ENCODE measurements at regions of chr4 and their contacts with region 1.

Region 1: GRCh38 chr4:47836641-47837093 is 1.2 kb downstream of the CORIN start:
- DNase-seq: peak in 30 of 35 experiments; percentile 10 to 62 (median 30)
- ATAC-seq: peak; percentile 69 to 80 (median 76)
- H3K4me3 ChIP-seq: peak overlapping the region; percentile 58 to 99
- H3K4me3 Mint-ChIP-seq: peak overlapping the region; percentile 84 to 90 (median 88)
- H3K27ac ChIP-seq: no peak overlapping the region
- H3K27ac Mint-ChIP-seq: peak overlapping the region in 1 of 2 donors; percentile 48
- H3K4me1 ChIP-seq: peaks cover 16 to 27% of the 10 kb centered on the region in 2 experiments
- H3K4me1 Mint-ChIP-seq: peaks cover 21 to 46% (median 33%) of the 10 kb centered on the region in 3 donors
- H3K27me3 ChIP-seq: peaks cover 4 to 9% of the 10 kb centered on the region in 2 experiments
- H3K27me3 Mint-ChIP-seq: peaks cover 3 to 11% of the 10 kb centered on the region in 2 donors

Region 2: GRCh38 chr4:47686294-47686872 is 150.3 kb before region 1 on chr4:
- CTCF ChIA-PET with region 1: interaction called in 1 of 2 experiments, 23 read pairs
- POLR2A ChIA-PET with region 1: no interaction called
- DNase-seq: peak; percentile 8 to 75 (median 42)
- ATAC-seq: peak in 3 of 4 experiments; percentile 60 to 77 (median 73)
- H3K4me3 ChIP-seq: no peak overlapping the region
- H3K4me3 Mint-ChIP-seq: no peak overlapping the region
- H3K27ac ChIP-seq: no peak overlapping the region
- H3K27ac Mint-ChIP-seq: no peak overlapping the region
- H3K4me1 ChIP-seq: no peaks in the 10 kb centered on the region
- H3K4me1 Mint-ChIP-seq: no peaks in the 10 kb centered on the region
- H3K27me3 ChIP-seq: no peaks in the 10 kb centered on the region
- H3K27me3 Mint-ChIP-seq: peaks cover 11 to 13% of the 10 kb centered on the region in 2 donors

Region 3: GRCh38 chr4:47933840-47934239 is 97.2 kb after region 1 on chr4:
- CTCF ChIA-PET with region 1: interaction called in 1 of 2 experiments, 10 read pairs
- POLR2A ChIA-PET with region 1: no interaction called
- DNase-seq: peak in 1 of 35 experiments; percentile 72
- ATAC-seq: peak in 3 of 4 experiments; percentile 29 to 65 (median 64)
- H3K4me3 ChIP-seq: no peak overlapping the region
- H3K4me3 Mint-ChIP-seq: no peak overlapping the region
- H3K27ac ChIP-seq: no peak overlapping the region
- H3K27ac Mint-ChIP-seq: no peak overlapping the region
- H3K4me1 ChIP-seq: no peaks in the 10 kb centered on the region
- H3K4me1 Mint-ChIP-seq: peaks cover 0 to 5% (median 2%) of the 10 kb centered on the region in 3 donors
- H3K27me3 ChIP-seq: no peaks in the 10 kb centered on the region
- H3K27me3 Mint-ChIP-seq: peaks cover 0 to 5% of the 10 kb centered on the region in 2 donors

Region 4: GRCh38 chr4:48173056-48173991 is 336.7 kb after region 1 on chr4:
- CTCF ChIA-PET with region 1: no interaction called
- POLR2A ChIA-PET with region 1: no interaction called
- DNase-seq: no peak
- ATAC-seq: no peak
- H3K4me3 ChIP-seq: no peak overlapping the region
- H3K4me3 Mint-ChIP-seq: no peak overlapping the region
- H3K27ac ChIP-seq: no peak overlapping the region
- H3K27ac Mint-ChIP-seq: no peak overlapping the region
- H3K4me1 ChIP-seq: no peaks in the 10 kb centered on the region
- H3K4me1 Mint-ChIP-seq: no peaks in the 10 kb centered on the region
- H3K27me3 ChIP-seq: no peaks in the 10 kb centered on the region
- H3K27me3 Mint-ChIP-seq: no peaks in the 10 kb centered on the region

Region 5: DNA sequence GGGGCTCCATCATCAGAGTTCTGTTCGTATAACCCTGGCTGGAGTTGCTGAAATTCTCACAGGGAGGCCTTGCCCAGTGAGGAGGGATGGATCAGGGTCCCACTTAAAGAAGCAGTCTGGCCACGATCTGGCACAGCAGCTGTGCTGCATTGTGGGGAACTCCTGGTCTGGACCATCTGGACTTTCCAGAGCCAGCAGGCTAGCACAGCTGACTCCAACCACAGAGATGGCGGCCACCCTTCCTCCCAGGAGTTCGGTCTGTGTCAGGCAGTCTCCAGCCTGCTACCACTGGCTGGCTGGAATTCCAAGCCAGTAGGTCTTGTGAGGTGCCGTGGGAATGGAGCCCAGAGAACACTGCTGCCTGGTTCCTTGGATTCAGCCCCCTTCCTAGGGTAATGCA is 566.7 kb after region 1 on chr4:
- CTCF ChIA-PET with region 1: no interaction called
- POLR2A ChIA-PET with region 1: no interaction called
- DNase-seq: no peak
- ATAC-seq: no peak
- H3K4me3 ChIP-seq: no peak overlapping the region
- H3K4me3 Mint-ChIP-seq: no peak overlapping the region
- H3K27ac ChIP-seq: no peak overlapping the region
- H3K27ac Mint-ChIP-seq: no peak overlapping the region
- H3K4me1 ChIP-seq: no peaks in the 10 kb centered on the region
- H3K4me1 Mint-ChIP-seq: peaks cover 34 to 50% (median 37%) of the 10 kb centered on the region in 3 donors
- H3K27me3 ChIP-seq: no peaks in the 10 kb centered on the region
- H3K27me3 Mint-ChIP-seq: no peaks in the 10 kb centered on the region

Region 6: DNA sequence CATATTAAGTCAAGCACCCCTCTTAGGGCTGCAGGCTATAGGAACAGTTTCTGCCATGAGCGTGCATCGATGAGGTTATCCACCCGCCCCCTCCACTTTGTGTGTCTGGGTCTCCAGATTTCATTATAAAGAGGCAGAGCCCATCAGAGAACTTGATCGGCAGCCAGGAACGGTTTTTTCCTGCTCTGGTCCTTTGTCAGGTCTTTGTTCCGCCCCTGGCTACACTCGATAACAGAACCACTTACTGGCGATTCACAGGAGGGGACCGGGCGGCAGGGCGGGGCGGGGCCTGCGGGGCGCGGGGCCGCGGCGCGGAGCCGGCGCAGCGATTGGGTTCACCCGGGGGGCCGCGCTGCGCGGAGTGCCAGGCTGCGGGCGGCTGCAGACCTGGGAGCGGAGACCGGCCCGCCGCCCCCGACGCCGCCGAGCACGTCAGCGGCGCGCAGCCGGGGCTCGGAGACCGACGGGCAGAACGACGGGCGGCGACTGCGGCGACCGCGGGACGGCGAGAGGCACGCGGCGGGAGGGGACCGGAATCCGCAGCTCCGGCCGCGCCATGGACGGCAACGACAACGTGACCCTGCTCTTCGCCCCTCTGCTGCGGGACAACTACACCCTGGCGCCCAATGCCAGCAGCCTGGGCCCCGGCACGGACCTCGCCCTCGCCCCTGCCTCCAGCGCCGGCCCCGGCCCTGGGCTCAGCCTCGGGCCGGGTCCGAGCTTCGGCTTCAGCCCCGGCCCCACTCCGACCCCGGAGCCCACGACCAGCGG is 646.5 kb after region 1 on chr4 and contains the start of gene SLC10A4:
- CTCF ChIA-PET with region 1: interaction called in 1 of 2 experiments, 10 read pairs
- POLR2A ChIA-PET with region 1: no interaction called
- DNase-seq: peak in 2 of 35 experiments; percentile 1 to 12
- ATAC-seq: peak; percentile 56 to 60 (median 58)
- H3K4me3 ChIP-seq: peak within 1 kb of the TSS in 1 of 2 donors; percentile 58
- H3K4me3 Mint-ChIP-seq: peak within 1 kb of the TSS; percentile 67 to 72 (median 70)
- H3K27ac ChIP-seq: no peak within 1 kb of the TSS
- H3K27ac Mint-ChIP-seq: peak within 1 kb of the TSS in 1 of 2 donors; percentile 65
- H3K4me1 ChIP-seq: peaks cover 2 to 14% of the 10 kb centered on the region in 2 experiments
- H3K4me1 Mint-ChIP-seq: peaks cover 14 to 19% (median 19%) of the 10 kb centered on the region in 3 donors
- H3K27me3 ChIP-seq: peaks cover 26 to 38% of the 10 kb centered on the region in 2 experiments
- H3K27me3 Mint-ChIP-seq: peaks cover 53 to 58% of the 10 kb centered on the region in 2 donors
- total RNA-seq, gene SLC10A4: 0.40 TPM in 1 of 5 donors, not detected in the others

Measured in T-cell (primary cell).